ENCODE measurements at regions of chr2 and their contacts with region 1.

Region 1: GRCh38 chr2:33583194-33583938 is 15.7 kb downstream of the FAM98A start:
- DNase-seq: no peak
- H3K4me3 Mint-ChIP-seq: no peak overlapping the region
- H3K27ac Mint-ChIP-seq: no peak overlapping the region
- H3K4me1 Mint-ChIP-seq: peaks cover 14% of the 10 kb centered on the region
- H3K27me3 Mint-ChIP-seq: no peaks in the 10 kb centered on the region

Region 2: DNA sequence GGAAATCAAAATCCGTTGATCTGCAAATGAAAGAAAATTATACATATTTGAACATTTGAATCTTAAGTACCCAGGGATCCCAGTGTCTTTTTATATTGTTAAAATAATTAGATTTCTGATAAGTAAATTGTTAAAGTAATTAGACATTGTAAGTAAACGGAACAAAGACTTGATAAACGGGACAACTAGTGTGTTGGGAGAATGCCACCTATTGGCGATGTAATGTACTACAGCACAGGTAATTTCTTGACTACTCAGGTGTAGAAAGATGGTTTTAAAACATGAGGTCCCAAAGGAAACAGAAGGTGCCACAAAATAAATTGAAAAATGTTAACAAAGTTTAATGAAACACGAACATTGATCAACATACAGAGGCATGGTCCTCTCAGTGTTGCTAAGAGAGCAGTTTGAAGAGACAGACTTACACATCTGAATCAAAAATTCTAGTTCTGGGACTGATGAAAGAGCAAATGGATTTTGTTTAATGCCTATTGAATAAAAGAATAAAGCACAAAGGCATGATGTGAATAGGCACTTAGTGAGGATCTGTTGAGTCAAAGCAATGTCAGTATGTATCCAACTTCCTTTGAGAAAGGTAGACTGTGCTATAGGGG is 210.3 kb before region 1 on chr2:
- CTCF ChIA-PET with region 1: interaction called, 10 read pairs
- POLR2A ChIA-PET with region 1: no interaction called
- DNase-seq: no peak
- H3K4me3 Mint-ChIP-seq: no peak overlapping the region
- H3K27ac Mint-ChIP-seq: no peak overlapping the region
- H3K4me1 Mint-ChIP-seq: no peaks in the 10 kb centered on the region
- H3K27me3 Mint-ChIP-seq: no peaks in the 10 kb centered on the region

Region 3: DNA sequence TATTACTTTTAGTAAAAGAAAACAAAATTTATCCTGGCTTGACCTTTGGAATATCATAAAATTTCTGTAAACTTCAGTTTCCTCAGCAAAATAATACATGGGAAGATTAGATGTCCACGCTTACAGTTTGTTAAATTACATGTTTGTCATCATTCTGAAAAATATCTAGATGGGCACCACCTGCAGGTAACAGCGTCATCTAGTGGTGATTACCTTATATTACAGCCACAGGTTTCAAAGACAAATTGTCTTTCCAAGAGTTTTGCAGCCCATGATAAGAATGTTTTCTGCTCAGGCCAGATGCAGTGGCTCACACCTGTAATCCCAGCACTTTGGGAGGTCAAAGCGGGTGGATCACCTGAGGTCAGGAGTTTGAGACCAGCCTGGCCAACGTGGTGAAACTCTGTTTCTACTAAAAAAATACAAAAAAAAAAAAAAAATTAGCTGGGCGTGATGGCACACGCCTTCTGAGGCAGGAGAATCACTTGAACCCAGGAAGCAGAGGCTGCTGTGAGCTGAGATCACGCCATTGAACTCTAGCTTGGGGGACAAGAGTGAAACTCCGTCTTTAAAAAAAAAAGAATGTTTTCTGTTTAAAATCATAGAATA is 203.3 kb before region 1 on chr2:
- CTCF ChIA-PET with region 1: interaction called, 17 read pairs
- POLR2A ChIA-PET with region 1: no interaction called
- DNase-seq: no peak
- H3K4me3 Mint-ChIP-seq: no peak overlapping the region
- H3K27ac Mint-ChIP-seq: no peak overlapping the region
- H3K4me1 Mint-ChIP-seq: no peaks in the 10 kb centered on the region
- H3K27me3 Mint-ChIP-seq: peaks cover 7% of the 10 kb centered on the region

Region 4: GRCh38 chr2:33475224-33476130 is 107.9 kb before region 1 on chr2:
- CTCF ChIA-PET with region 1: interaction called, 27 read pairs
- POLR2A ChIA-PET with region 1: interaction called, 26 read pairs
- DNase-seq: peak; percentile 86
- H3K4me3 Mint-ChIP-seq: peak overlapping the region; percentile 80
- H3K27ac Mint-ChIP-seq: peak overlapping the region; percentile 98
- H3K4me1 Mint-ChIP-seq: peaks cover 36% of the 10 kb centered on the region
- H3K27me3 Mint-ChIP-seq: peaks cover 1% of the 10 kb centered on the region

Region 5: DNA sequence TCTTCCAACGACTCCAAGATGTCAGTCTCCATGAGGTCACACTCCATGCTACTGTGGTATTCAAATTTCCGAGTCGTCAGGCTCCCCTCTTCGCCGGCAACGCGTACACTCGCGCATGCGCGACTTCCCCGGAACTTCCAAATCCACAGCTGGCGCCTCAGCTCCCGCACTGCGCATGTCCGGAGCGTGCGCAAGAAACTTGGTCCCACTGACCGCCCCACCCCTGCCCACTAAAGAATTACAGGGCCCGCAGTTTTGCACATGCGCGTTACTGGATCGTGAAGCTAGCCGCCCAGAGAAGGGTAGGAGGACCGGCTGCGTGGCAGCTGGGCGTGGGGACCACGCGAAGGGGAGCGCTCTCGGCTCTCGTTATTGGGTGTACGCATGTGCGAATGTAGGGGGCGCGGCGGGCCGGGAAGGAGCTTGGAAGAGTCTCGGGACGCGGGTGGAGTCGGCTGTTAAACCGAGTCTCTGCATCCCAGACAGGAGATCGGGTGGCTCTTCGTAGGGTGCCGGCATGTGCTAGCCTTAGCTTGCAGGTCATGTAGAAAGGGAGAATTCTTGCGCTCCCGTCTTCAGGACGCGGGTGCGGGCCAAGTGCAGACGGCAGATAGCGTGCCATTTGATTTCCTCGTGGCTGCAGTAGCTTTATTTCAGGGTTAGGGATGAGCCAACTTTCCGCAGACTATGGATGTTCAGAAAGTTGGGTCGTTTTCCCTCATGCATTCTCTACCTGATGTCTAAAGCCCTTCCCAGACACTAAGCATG is 16.0 kb after region 1 on chr2 and contains the start of gene FAM98A:
- CTCF ChIA-PET with region 1: interaction called, 32 read pairs
- POLR2A ChIA-PET with region 1: interaction called, 12 read pairs
- DNase-seq: peak; percentile 98
- H3K4me3 Mint-ChIP-seq: peak within 1 kb of the TSS; percentile 96
- H3K27ac Mint-ChIP-seq: peak within 1 kb of the TSS; percentile 82
- H3K4me1 Mint-ChIP-seq: peaks cover 28% of the 10 kb centered on the region
- H3K27me3 Mint-ChIP-seq: no peaks in the 10 kb centered on the region
- total RNA-seq, gene FAM98A: 31.3 to 32.2 TPM

Region 6: DNA sequence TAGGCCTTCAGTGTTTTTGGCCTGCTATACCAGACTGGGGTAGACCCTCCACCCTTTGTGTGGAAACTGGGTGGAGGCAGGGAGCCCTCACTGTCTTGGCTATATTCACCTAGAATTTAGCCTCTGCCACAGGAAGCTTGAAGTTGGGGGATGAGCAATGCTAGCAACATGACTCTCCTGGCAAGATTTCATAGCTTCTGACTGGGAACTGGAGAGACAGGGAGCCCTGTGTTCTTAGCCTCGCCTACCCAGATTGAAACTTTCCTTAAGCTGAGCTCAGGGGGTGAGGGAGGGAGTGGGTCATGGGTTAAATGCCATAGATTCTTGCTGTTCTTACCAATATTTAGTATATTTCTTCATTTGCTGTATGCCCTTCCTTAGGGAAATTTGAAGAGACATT is 62.5 kb after region 1 on chr2:
- CTCF ChIA-PET with region 1: no interaction called
- POLR2A ChIA-PET with region 1: no interaction called
- DNase-seq: no peak
- H3K4me3 Mint-ChIP-seq: no peak overlapping the region
- H3K27ac Mint-ChIP-seq: no peak overlapping the region
- H3K4me1 Mint-ChIP-seq: no peaks in the 10 kb centered on the region
- H3K27me3 Mint-ChIP-seq: peaks cover 3% of the 10 kb centered on the region

Measured in activated CD4-positive, alpha-beta memory T cell treated with anti-CD3 and anti-CD28 coated beads, Interleukin-2, amount 10 ng/mL, durations not matched to agents 7 days and 5 days (primary cell).